ENCODE measurements at regions of chr15 and their contacts with region 1.

Region 1: GRCh38 chr15:65275728-65276126 is 11.0 kb downstream of the PARP16 start:
- DNase-seq: no peak
- H3K4me3 ChIP-seq: no peak overlapping the region
- H3K27ac ChIP-seq: no peak overlapping the region
- H3K4me1 ChIP-seq: peaks cover 0 to under 1% (median 0%) of the 10 kb centered on the region in 4 experiments; a peak in 1 of 7 replicates
- H3K27me3 ChIP-seq: no peaks in the 10 kb centered on the region; a peak in 1 of 7 replicates
- CTCF ChIP-seq: no peak
- EP300 ChIP-seq: no peak
- POLR2A ChIP-seq: no peak
- RAD21 ChIP-seq: no peak

Region 2: GRCh38 chr15:65184868-65185738 is 90.6 kb before region 1 on chr15 and contains the start of gene CLPX:
- CTCF ChIA-PET with region 1: interaction called, 123 read pairs
- POLR2A ChIA-PET with region 1: interaction called, 6 read pairs
- DNase-seq: peak; percentile 87 to 88
- H3K4me3 ChIP-seq: peak within 1 kb of the TSS; percentile 60 to 95 (median 92)
- H3K27ac ChIP-seq: peak within 1 kb of the TSS; percentile 80; the same call in 1 of the 2 replicates
- H3K4me1 ChIP-seq: peaks cover 0 to 2% (median 0%) of the 10 kb centered on the region in 4 experiments; a peak in 2 of 7 replicates
- H3K27me3 ChIP-seq: no peaks in the 10 kb centered on the region
- CTCF ChIP-seq: no peak
- EP300 ChIP-seq: no peak
- POLR2A ChIP-seq: peak; percentile 51 to 86
- RAD21 ChIP-seq: no peak
- total RNA-seq, gene CLPX: 53.6 and 56.4 TPM in 2 replicates

Region 3: DNA sequence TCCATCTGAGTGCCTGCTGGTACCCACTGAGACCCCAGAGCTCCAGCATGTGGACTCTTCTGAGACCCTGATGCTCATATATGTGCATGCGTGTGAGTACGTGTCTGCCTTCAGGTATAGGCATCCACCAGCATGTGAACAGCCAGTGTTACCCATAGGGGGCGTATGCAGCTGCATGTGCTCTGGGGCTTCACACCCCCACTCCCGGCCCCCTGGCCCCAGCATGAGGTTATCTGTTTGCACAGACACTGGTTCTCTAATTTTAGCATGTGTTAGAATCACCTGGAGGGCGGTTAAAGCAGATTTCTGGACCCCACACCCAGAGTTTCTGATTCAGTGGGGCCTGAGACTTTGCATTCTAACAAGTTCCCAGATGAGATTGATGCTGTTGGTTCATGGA is 63.6 kb before region 1 on chr15:
- CTCF ChIA-PET with region 1: interaction called, 87 read pairs
- POLR2A ChIA-PET with region 1: interaction called, 3 read pairs
- DNase-seq: peak in 1 of 2 experiments; percentile 71
- H3K4me3 ChIP-seq: no peak overlapping the region
- H3K27ac ChIP-seq: no peak overlapping the region
- H3K4me1 ChIP-seq: peaks cover 0 to 4% (median 0%) of the 10 kb centered on the region in 4 experiments; a peak in 3 of 7 replicates
- H3K27me3 ChIP-seq: no peaks in the 10 kb centered on the region; a peak in 1 of 7 replicates
- CTCF ChIP-seq: peak; percentile 74 to 94 (median 85)
- EP300 ChIP-seq: no peak
- POLR2A ChIP-seq: no peak
- RAD21 ChIP-seq: peak; percentile 49 to 62

Region 4: DNA sequence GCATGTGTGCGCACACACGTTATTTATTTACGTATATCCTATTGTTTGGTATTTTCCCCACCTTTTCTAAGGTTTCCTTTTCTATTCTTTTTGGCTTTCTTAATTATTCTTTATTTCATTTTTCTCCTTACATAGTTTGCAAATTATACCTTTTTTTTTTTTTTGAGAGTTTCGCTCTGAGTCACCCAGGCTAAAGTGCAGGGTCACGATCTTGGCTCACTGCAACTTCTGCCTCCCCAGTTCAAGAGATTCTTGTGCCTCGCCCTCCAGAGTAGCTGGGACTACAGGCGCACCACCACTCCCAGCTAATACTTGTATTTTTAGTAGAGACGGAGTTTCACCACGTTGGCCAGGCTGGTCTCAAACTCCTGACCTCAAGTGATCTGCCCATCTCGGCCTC is 44.4 kb before region 1 on chr15:
- CTCF ChIA-PET with region 1: interaction called, 12 read pairs
- POLR2A ChIA-PET with region 1: no interaction called
- DNase-seq: no peak
- H3K4me3 ChIP-seq: no peak overlapping the region
- H3K27ac ChIP-seq: no peak overlapping the region
- H3K4me1 ChIP-seq: 0 out of 7 replicates have a peak, but pooled peaks cover 0 to under 1% (median 0%) of the 10 kb centered on the region in 4 experiments
- H3K27me3 ChIP-seq: no peaks in the 10 kb centered on the region
- CTCF ChIP-seq: no peak
- EP300 ChIP-seq: no peak
- POLR2A ChIP-seq: no peak
- RAD21 ChIP-seq: no peak

Region 5: DNA sequence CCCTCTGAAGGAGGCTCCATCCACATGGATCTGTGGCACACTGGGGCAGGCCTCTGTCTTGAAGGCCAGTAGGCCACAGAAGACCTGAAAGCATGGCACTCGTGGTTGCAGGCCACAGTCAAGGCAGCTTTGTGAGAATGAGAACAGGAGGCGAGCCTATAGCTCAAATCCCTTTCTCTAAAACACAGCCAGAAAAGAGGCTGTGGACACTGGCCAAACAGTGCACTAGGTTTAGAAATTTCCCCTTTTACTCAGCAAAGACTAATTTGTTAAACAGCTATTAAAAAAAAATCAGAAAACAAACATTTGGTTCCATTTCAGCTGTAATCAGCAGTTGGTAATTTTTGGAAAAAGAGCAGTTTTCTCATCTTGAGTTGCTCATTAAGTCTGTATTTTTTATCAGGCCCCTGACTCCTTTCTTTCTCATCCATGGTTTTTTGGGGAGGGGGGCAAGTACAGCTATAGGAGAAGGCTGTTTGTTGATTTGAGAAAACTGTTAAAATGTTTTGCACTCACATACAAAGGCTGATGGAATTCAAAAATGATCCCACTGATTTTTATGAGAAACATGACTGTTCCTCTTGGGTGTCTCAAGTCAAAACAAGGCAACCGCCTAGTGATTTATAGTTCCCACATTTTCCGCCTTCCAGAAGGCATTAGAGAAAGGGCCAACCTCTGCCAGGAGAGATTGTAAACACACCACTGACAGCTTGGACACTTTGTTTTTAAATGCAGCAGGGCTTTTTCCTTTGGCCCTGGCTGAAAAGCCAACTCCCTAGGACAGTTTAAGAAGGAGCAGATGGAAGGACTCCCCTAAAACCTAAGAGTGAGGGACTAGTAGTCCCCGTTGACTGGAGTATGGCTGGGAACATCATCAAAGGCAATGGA is 17.1 kb before region 1 on chr15:
- CTCF ChIA-PET with region 1: interaction called, 29 read pairs
- POLR2A ChIA-PET with region 1: interaction called, 4 read pairs
- DNase-seq: no peak
- H3K4me3 ChIP-seq: no peak overlapping the region
- H3K27ac ChIP-seq: no peak overlapping the region
- H3K4me1 ChIP-seq: no peaks in the 10 kb centered on the region
- H3K27me3 ChIP-seq: no peaks in the 10 kb centered on the region
- CTCF ChIP-seq: no peak
- EP300 ChIP-seq: no peak
- POLR2A ChIP-seq: no peak
- RAD21 ChIP-seq: no peak

Region 6: GRCh38 chr15:65286704-65287519 is 11.2 kb after region 1 on chr15 and contains the start of gene PARP16:
- CTCF ChIA-PET with region 1: interaction called, 114 read pairs
- POLR2A ChIA-PET with region 1: interaction called, 19 read pairs
- DNase-seq: peak in 1 of 2 experiments; percentile 93
- H3K4me3 ChIP-seq: peak within 1 kb of the TSS; percentile 69 to 77 (median 75)
- H3K27ac ChIP-seq: 0 out of 2 replicates have a peak within 1 kb of the TSS, but pooled peaks have one; percentile 31
- H3K4me1 ChIP-seq: peaks cover 0 to 10% (median 7%) of the 10 kb centered on the region in 4 experiments; a peak in 5 of 7 replicates
- H3K27me3 ChIP-seq: peaks cover 0 to 10% (median 10%) of the 10 kb centered on the region in 4 experiments; a peak in 6 of 7 replicates
- CTCF ChIP-seq: peak; percentile 37 to 66 (median 45)
- EP300 ChIP-seq: peak in 1 of 2 experiments; percentile 34; a peak in 1 of 3 replicates
- POLR2A ChIP-seq: peak in 1 of 2 experiments; percentile 69; a peak in 1 of 3 replicates
- RAD21 ChIP-seq: no peak; a peak in 1 of 4 replicates
- total RNA-seq, gene PARP16: 3.7 and 5.0 TPM in 2 replicates

Region 7: GRCh38 chr15:65304389-65305144 is 28.8 kb after region 1 on chr15 and contains the start of gene RNU5B-1:
- CTCF ChIA-PET with region 1: interaction called, 12 read pairs
- POLR2A ChIA-PET with region 1: interaction called, 10 read pairs
- DNase-seq: peak in 1 of 2 experiments; percentile 81
- H3K4me3 ChIP-seq: peak within 1 kb of the TSS; percentile 25 to 59 (median 44); a peak in 6 of 8 replicates
- H3K27ac ChIP-seq: peak within 1 kb of the TSS; percentile 80; the same call in 1 of the 2 replicates
- H3K4me1 ChIP-seq: peaks cover 0 to 4% (median 1%) of the 10 kb centered on the region in 4 experiments; a peak in 1 of 7 replicates
- H3K27me3 ChIP-seq: no peaks in the 10 kb centered on the region
- CTCF ChIP-seq: peak; percentile 61 to 80 (median 73)
- EP300 ChIP-seq: no peak
- POLR2A ChIP-seq: peak; percentile 100
- RAD21 ChIP-seq: peak in 1 of 2 experiments; percentile 43; a peak in 2 of 4 replicates
- total RNA-seq, gene RNU5B-1: not detected in 2 replicates

Measured in H1 (cell line).